HepG2 (cell line): ENCODE measurements at regions of chr17 and their contacts with region 1.

Region 1: GRCh38 chr17:43170766-43171585 is at the start of gene NBR1:
- DNase-seq: peak; percentile 99
- ATAC-seq: peak; percentile 90
- H3K4me3 ChIP-seq: peak within 1 kb of the TSS; percentile 62 to 94 (median 75)
- H3K27ac ChIP-seq: peak within 1 kb of the TSS; percentile 90
- H3K4me1 ChIP-seq: peaks cover 69% of the 10 kb centered on the region
- H3K27me3 ChIP-seq: no peaks in the 10 kb centered on the region; a peak in 1 of 5 replicates
- CTCF ChIP-seq: peak; percentile 79
- EP300 ChIP-seq: peak in 1 of 2 experiments; percentile 43; a peak in 2 of 4 replicates
- POLR2A ChIP-seq: peak; percentile 76 to 89
- RAD21 ChIP-seq: peak; percentile 68
- total RNA-seq, gene NBR1: 51.7 and 79.0 TPM in 2 replicates

Region 2: GRCh38 chr17:42953669-42954068 is 217.3 kb before region 1 on chr17:
- CTCF ChIA-PET with region 1: no interaction called
- POLR2A ChIA-PET with region 1: no interaction called
- in situ Hi-C with region 1: no loop called
- intact Hi-C with region 1: no loop called
- DNase-seq: peak; percentile 55
- ATAC-seq: peak; percentile 73
- H3K4me3 ChIP-seq: no peak overlapping the region
- H3K27ac ChIP-seq: no peak overlapping the region
- H3K4me1 ChIP-seq: peaks cover 13% of the 10 kb centered on the region
- H3K27me3 ChIP-seq: no peaks in the 10 kb centered on the region
- CTCF ChIP-seq: no peak
- EP300 ChIP-seq: no peak
- POLR2A ChIP-seq: no peak
- RAD21 ChIP-seq: no peak

Region 3: GRCh38 chr17:43006639-43007551 is 164.1 kb before region 1 on chr17 and contains the start of gene IFI35:
- CTCF ChIA-PET with region 1: no interaction called
- POLR2A ChIA-PET with region 1: interaction called, 7 read pairs
- in situ Hi-C with region 1: no loop called
- intact Hi-C with region 1: loop called (anchors 5 kb)
- DNase-seq: peak; percentile 83
- ATAC-seq: peak; percentile 78
- H3K4me3 ChIP-seq: peak within 1 kb of the TSS; percentile 71 to 92 (median 88)
- H3K27ac ChIP-seq: peak within 1 kb of the TSS; percentile 92
- H3K4me1 ChIP-seq: peaks cover 81% of the 10 kb centered on the region
- H3K27me3 ChIP-seq: no peaks in the 10 kb centered on the region; a peak in 1 of 5 replicates
- CTCF ChIP-seq: peak; percentile 97
- EP300 ChIP-seq: no peak
- POLR2A ChIP-seq: peak; percentile 75 to 76
- RAD21 ChIP-seq: peak; percentile 88
- total RNA-seq, gene IFI35: 38.1 and 40.2 TPM in 2 replicates

Region 4: GRCh38 chr17:43125133-43125966 is 45.6 kb before region 1 on chr17 and contains the start of gene BRCA1:
- CTCF ChIA-PET with region 1: no interaction called
- POLR2A ChIA-PET with region 1: interaction called, 20 read pairs
- in situ Hi-C with region 1: no loop called
- intact Hi-C with region 1: loop called (anchors 1 kb)
- DNase-seq: peak; percentile 100
- ATAC-seq: peak; percentile 91
- H3K4me3 ChIP-seq: peak within 1 kb of the TSS; percentile 87 to 94 (median 91)
- H3K27ac ChIP-seq: peak within 1 kb of the TSS; percentile 95
- H3K4me1 ChIP-seq: peaks cover 53% of the 10 kb centered on the region
- H3K27me3 ChIP-seq: no peaks in the 10 kb centered on the region; a peak in 1 of 5 replicates
- CTCF ChIP-seq: peak; percentile 23; the same call in 1 of the 2 replicates
- EP300 ChIP-seq: peak; percentile 45 to 73; a peak in 2 of 4 replicates
- POLR2A ChIP-seq: peak; percentile 76 to 97
- RAD21 ChIP-seq: peak; percentile 55; the same call in 1 of the 2 replicates
- total RNA-seq, gene BRCA1: 37.5 and 56.0 TPM in 2 replicates

Region 5: DNA sequence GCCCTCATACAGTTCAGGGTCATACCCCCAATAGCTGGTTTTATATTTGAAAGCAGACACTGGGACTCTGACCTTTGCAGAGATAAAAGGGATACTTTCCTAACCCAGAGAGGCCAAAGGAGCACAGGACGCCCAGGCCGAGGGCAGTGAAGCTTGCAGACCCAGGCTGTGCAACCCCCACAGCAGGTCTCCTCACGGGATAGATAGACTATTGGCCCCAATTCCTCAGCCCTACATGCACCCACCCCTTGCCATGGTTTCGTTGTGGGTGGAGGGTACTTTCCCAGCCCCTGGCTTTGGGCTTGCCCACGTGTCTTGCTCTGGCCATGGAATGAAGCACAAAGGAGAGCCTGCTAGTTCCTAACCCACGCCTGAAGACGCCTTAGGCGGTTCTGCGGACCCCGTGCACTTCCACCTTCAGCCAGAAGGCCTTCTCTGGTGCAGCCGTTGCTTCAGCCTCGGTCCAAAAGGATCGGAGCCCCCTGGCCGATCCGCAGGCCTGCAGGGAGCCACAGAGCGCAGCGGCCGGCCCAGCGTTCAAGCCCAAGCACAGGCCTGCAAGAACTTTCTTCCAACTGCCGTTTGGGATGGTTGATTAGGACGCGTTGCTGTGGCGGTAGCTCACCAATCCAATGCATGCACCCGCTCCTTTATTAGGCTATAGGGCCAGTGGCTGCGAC is 36.1 kb before region 1 on chr17:
- CTCF ChIA-PET with region 1: no interaction called
- POLR2A ChIA-PET with region 1: interaction called, 12 read pairs
- in situ Hi-C with region 1: no loop called
- intact Hi-C with region 1: no loop called
- DNase-seq: peak; percentile 92
- ATAC-seq: peak; percentile 98
- H3K4me3 ChIP-seq: peak overlapping the region in 1 of 3 experiments; percentile 18; a peak in 2 of 6 replicates
- H3K27ac ChIP-seq: peak overlapping the region; percentile 79
- H3K4me1 ChIP-seq: peaks cover 54% of the 10 kb centered on the region
- H3K27me3 ChIP-seq: no peaks in the 10 kb centered on the region
- CTCF ChIP-seq: no peak
- EP300 ChIP-seq: peak; percentile 36 to 85; a peak in 2 of 4 replicates
- POLR2A ChIP-seq: peak; percentile 44 to 58; a peak in 3 of 4 replicates
- RAD21 ChIP-seq: peak; percentile 51